ENCODE measurements at regions of chr16 and their contacts with region 1.

Region 1: GRCh38 chr16:84548971-84549844 is 44.7 kb upstream of the MEAK7 start:
- DNase-seq: peak; percentile 62
- H3K4me3 Mint-ChIP-seq: peak overlapping the region; percentile 87
- H3K27ac Mint-ChIP-seq: peak overlapping the region; percentile 96
- H3K4me1 Mint-ChIP-seq: peaks cover 58% of the 10 kb centered on the region
- H3K27me3 Mint-ChIP-seq: no peaks in the 10 kb centered on the region

Region 2: DNA sequence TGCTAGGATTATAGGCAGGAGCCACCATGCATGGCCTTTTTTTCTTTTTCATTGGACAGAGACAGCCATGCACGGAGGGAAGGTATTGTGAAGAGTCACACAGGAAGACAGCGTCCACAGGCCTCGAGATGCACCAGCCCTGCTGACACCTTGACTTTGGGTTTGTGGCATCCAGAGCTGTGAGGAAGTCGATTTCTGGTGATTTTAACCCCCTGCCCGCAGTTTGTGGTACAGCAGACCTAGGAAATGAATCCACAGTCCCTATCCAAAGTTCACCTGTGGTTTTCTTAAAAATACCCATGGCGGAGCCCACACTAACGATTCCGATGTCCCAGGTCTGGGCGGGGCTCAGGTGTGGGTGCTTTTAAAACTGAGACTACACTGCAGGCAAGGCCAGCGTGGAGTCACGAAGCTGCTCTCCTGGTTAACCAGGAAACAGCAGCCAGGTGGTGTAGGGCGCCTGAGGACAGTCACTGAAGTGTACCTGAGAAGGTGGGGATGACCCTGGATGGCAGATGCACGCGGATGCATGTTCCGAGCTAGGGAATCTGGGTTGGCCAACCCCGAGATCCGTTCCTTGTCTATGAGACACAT is 30.4 kb before region 1 on chr16:
- CTCF ChIA-PET with region 1: interaction called, 20 read pairs
- POLR2A ChIA-PET with region 1: interaction called, 62 read pairs
- DNase-seq: peak; percentile 89
- H3K4me3 Mint-ChIP-seq: peak overlapping the region; percentile 37
- H3K27ac Mint-ChIP-seq: peak overlapping the region; percentile 82
- H3K4me1 Mint-ChIP-seq: peaks cover 67% of the 10 kb centered on the region
- H3K27me3 Mint-ChIP-seq: no peaks in the 10 kb centered on the region

Region 3: DNA sequence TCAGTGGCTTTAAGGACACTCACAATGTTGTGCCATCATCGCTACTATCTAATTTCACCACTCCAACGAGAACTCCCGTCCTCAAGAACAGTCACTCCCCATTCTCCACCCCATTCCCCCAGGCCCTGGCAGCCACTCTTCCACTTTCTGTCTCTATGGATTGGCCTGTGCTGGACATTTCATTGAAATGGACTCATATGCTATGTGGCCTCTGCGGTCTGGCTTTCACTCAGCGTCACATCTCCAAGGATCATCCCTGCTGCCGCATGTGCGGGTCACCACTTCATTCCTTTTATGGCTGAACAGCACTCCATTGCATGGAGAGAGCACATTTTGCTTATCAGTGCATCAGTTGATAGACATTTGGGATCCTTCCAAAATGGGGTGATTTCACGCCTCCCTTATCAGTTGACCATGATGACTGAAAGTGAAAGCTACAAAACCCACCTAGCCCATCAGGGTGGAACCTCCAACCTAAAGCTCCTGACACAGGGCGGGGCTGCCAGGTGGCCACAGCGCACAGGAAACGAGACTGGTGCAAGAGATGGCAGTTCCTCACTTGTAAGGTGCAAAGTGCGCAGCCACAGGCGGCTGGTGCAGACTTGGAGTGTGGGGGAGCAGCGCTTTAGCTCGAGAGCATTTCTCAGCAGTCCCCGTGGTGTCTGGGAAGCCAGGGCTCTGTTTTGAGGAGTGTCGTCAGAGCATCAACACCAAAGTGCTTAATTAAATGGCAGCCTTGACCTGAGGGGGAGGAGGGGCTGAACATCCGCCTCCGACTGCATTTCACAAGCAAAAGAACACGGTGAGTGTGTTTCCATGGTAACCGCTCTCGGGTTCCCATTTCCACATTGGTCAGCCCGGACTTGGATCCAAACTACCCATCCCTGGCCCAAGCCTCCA is 44.9 kb after region 1 on chr16:
- CTCF ChIA-PET with region 1: interaction called, 12 read pairs
- POLR2A ChIA-PET with region 1: interaction called, 37 read pairs
- DNase-seq: peak; percentile 91
- H3K4me3 Mint-ChIP-seq: peak overlapping the region; percentile 81
- H3K27ac Mint-ChIP-seq: peak overlapping the region; percentile 96
- H3K4me1 Mint-ChIP-seq: peaks cover 82% of the 10 kb centered on the region
- H3K27me3 Mint-ChIP-seq: no peaks in the 10 kb centered on the region

Region 4: DNA sequence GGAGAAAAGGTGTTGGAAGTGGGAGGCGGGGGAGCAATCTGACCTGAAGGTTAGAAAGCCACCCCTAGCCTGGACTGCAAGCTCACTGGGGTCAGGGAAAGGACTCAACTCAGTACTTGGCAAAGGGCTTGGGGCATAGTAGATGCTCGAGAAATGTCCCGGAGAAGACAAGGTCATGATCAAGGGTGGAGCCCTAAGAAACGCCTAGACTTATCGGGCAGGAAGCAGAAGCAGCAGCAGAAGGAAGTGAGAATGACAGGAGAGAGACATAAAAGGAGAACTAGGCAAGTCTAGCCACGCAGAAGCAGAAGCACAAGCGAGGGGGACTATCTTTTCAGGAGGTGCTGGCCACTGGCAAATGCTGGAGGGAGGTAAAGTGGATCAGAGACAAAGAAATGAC is 58.5 kb after region 1 on chr16:
- CTCF ChIA-PET with region 1: interaction called, 3 read pairs
- POLR2A ChIA-PET with region 1: interaction called, 43 read pairs
- DNase-seq: peak; percentile 51
- H3K4me3 Mint-ChIP-seq: peak overlapping the region; percentile 70
- H3K27ac Mint-ChIP-seq: peak overlapping the region; percentile 92
- H3K4me1 Mint-ChIP-seq: peaks cover 94% of the 10 kb centered on the region
- H3K27me3 Mint-ChIP-seq: no peaks in the 10 kb centered on the region

Region 5: GRCh38 chr16:84714028-84714427 is 164.8 kb after region 1 on chr16:
- CTCF ChIA-PET with region 1: no interaction called
- POLR2A ChIA-PET with region 1: no interaction called
- DNase-seq: no peak
- H3K4me3 Mint-ChIP-seq: no peak overlapping the region
- H3K27ac Mint-ChIP-seq: no peak overlapping the region
- H3K4me1 Mint-ChIP-seq: peaks cover 34% of the 10 kb centered on the region
- H3K27me3 Mint-ChIP-seq: no peaks in the 10 kb centered on the region

Measured in activated CD4-positive, alpha-beta memory T cell treated with anti-CD3 and anti-CD28 coated beads, Interleukin-2, amount 10 ng/mL, durations not matched to agents 7 days and 5 days (primary cell).